Sciatic nerve (tissue), 2 donors: ENCODE measurements at regions of chr18 and their contacts with region 1.

Region 1: DNA sequence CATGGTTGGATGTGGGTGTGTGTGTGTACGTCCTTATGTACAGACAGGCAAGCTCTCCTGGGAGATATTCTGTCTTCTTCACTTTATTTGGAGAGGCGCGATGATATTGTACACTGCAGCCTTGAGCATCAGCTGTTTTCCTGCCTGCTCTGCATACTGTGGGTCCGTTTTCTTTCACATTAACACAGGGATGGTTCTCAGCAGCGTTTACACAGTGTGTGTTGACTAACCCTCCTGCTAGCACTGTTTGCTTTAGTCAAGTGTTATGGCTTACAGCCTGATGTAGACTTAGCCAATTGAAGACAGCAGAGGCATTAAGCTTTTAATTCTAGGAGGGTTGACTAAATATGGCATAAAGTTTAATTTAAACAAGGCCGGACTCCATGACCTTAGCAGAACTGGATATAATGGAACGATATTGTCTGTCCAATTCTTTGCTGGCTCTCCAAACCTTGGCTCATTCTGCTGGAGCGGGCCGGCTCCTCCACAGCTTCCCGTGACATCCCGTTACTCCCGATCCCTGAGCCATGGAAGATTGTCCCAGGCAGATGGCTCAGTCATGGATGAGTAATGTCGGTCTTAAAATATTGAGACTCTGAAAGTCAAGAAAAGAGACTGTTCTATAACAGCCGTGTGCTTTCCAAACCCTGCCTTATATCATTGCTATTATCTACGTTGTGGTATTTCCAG is 134.7 kb downstream of the TPGS2 start:
- DNase-seq: no peak
- ATAC-seq: peak; percentile 64

Region 2: GRCh38 chr18:36446059-36446458 is 248.0 kb before region 1 on chr18:
- intact Hi-C with region 1: no loop called
- DNase-seq: no peak
- ATAC-seq: no peak

Region 3: DNA sequence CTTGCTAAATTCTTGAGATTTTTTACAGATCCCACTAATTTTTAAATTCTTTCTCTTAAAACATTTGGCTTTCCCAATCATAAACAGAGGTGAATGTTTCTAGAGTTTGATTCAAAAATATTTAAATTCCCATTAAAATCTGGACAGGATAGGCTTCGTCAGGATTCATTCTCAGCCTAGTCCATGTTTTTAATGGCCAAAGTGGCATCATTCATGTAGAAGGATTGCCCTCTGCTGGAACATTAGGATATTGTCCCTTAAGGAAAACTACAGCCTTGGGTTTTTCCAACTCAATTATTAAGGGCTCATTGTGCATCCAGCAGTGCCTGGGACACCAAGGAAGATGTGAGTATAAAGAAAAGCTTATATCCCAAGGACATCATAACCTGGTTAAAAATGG is 63.0 kb after region 1 on chr18:
- intact Hi-C with region 1: loop called (anchors 10 kb)
- DNase-seq: no peak
- ATAC-seq: peak; percentile 86